Activated CD4-positive, alpha-beta T cell treated with anti-CD3 and anti-CD28 coated beads for 36 hours (primary cell): ENCODE measurements at regions of chr12 and their contacts with region 1.

Region 1: GRCh38 chr12:104358347-104359003 is 54.9 kb downstream of the EID3 start:
- DNase-seq: peak; percentile 82
- ATAC-seq: peak; percentile 90
- H3K4me3 Mint-ChIP-seq: no peak overlapping the region
- H3K27ac Mint-ChIP-seq: no peak overlapping the region
- H3K4me1 Mint-ChIP-seq: peaks cover 3% of the 10 kb centered on the region
- H3K27me3 Mint-ChIP-seq: no peaks in the 10 kb centered on the region

Region 2: GRCh38 chr12:103877934-103878510 is 480.5 kb before region 1 on chr12:
- CTCF ChIA-PET with region 1: no interaction called
- POLR2A ChIA-PET with region 1: no interaction called
- intact Hi-C with region 1: loop called in 1 of 2 experiments (anchors 2 kb)
- DNase-seq: peak; percentile 75
- ATAC-seq: peak; percentile 85
- H3K4me3 Mint-ChIP-seq: no peak overlapping the region
- H3K27ac Mint-ChIP-seq: no peak overlapping the region
- H3K4me1 Mint-ChIP-seq: peaks cover 21% of the 10 kb centered on the region
- H3K27me3 Mint-ChIP-seq: no peaks in the 10 kb centered on the region

Region 3: DNA sequence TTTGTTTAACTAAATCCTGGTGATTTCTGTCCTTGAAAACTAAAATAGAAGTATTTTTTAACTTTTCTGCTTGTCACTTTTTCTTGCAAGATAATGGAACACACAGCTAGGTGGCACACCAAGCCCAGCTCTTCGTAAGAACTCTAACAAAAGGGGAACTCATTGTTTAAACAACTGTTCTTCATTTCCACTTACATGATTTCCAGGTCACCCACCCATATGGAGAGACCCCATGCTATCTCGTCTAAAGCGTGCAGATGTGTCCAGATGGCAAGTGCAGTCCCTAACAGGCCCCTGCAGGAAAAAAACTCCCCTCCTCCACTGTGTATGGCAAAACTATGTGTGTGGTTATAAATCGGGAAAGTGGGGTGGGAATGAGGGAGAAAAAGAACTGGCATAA is 474.2 kb before region 1 on chr12:
- CTCF ChIA-PET with region 1: no interaction called
- POLR2A ChIA-PET with region 1: no interaction called
- intact Hi-C with region 1: loop called in 1 of 2 experiments (anchors 2 kb)
- DNase-seq: peak; percentile 66
- ATAC-seq: peak; percentile 57
- H3K4me3 Mint-ChIP-seq: no peak overlapping the region
- H3K27ac Mint-ChIP-seq: no peak overlapping the region
- H3K4me1 Mint-ChIP-seq: peaks cover 18% of the 10 kb centered on the region
- H3K27me3 Mint-ChIP-seq: no peaks in the 10 kb centered on the region

Region 4: GRCh38 chr12:104345234-104346066 is 13.0 kb before region 1 on chr12:
- CTCF ChIA-PET with region 1: interaction called, 11 read pairs
- POLR2A ChIA-PET with region 1: no interaction called
- intact Hi-C with region 1: no loop called
- DNase-seq: no peak
- ATAC-seq: no peak
- H3K4me3 Mint-ChIP-seq: no peak overlapping the region
- H3K27ac Mint-ChIP-seq: no peak overlapping the region
- H3K4me1 Mint-ChIP-seq: no peaks in the 10 kb centered on the region
- H3K27me3 Mint-ChIP-seq: no peaks in the 10 kb centered on the region

Region 5: GRCh38 chr12:104852102-104852501 is 493.6 kb after region 1 on chr12:
- CTCF ChIA-PET with region 1: no interaction called
- POLR2A ChIA-PET with region 1: no interaction called
- intact Hi-C with region 1: no loop called
- DNase-seq: no peak
- ATAC-seq: no peak
- H3K4me3 Mint-ChIP-seq: no peak overlapping the region
- H3K27ac Mint-ChIP-seq: no peak overlapping the region
- H3K4me1 Mint-ChIP-seq: no peaks in the 10 kb centered on the region
- H3K27me3 Mint-ChIP-seq: no peaks in the 10 kb centered on the region